Common myeloid progenitor, CD34-positive (primary cell): ENCODE measurements at regions of chr16 and their contacts with region 1.

Region 1: GRCh38 chr16:8567750-8568617 is 22.3 kb downstream of the TMEM114 start:
- DNase-seq: peak; percentile 93 to 97 (median 96)
- H3K4me3 ChIP-seq: no peak overlapping the region
- H3K27ac ChIP-seq: no peak overlapping the region
- H3K4me1 ChIP-seq: peaks cover 0 to 6% (median 3%) of the 10 kb centered on the region in 4 experiments
- H3K27me3 ChIP-seq: peaks cover 0 to 11% (median 0%) of the 10 kb centered on the region in 5 experiments

Region 2: DNA sequence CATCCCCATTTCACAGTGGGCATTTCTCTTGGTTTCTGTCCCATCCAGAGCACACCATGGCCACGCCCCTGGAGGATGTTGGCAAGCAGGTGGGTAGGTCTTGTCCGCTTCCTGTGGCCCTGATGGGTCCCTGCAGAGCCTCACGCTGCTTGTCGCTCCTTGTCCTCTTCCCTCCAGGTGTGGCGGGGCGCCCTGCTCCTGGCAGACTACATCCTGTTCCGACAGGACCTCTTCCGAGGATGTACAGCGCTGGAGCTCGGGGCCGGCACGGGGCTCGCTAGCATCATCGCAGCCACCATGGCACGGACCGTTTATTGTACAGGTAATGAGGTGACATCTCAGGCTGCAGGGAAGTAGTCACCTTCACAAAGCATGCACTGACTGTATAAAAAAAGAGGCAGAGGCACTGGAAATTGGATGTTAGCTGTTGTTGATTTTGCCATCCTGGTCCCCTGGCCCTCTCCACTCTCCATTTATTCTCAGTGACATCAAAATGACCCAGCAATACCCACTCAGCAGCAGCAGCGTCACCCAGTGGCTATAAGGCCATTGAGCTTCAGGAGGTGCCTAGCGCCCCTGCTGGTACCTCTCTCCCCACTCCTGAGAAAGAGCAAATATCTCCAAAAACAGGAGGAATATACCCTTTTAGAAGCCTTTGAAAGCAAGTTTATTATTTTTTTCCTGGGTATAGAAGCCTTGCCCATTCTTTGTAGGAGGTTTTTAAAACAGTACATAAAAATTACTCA is 67.2 kb after region 1 on chr16:
- CTCF ChIA-PET with region 1: interaction called, 10 read pairs
- POLR2A ChIA-PET with region 1: no interaction called
- DNase-seq: peak in 1 of 3 donors; percentile 17
- H3K4me3 ChIP-seq: no peak overlapping the region
- H3K27ac ChIP-seq: no peak overlapping the region
- H3K4me1 ChIP-seq: peaks cover 3 to 23% (median 16%) of the 10 kb centered on the region in 4 experiments
- H3K27me3 ChIP-seq: no peaks in the 10 kb centered on the region

Region 3: DNA sequence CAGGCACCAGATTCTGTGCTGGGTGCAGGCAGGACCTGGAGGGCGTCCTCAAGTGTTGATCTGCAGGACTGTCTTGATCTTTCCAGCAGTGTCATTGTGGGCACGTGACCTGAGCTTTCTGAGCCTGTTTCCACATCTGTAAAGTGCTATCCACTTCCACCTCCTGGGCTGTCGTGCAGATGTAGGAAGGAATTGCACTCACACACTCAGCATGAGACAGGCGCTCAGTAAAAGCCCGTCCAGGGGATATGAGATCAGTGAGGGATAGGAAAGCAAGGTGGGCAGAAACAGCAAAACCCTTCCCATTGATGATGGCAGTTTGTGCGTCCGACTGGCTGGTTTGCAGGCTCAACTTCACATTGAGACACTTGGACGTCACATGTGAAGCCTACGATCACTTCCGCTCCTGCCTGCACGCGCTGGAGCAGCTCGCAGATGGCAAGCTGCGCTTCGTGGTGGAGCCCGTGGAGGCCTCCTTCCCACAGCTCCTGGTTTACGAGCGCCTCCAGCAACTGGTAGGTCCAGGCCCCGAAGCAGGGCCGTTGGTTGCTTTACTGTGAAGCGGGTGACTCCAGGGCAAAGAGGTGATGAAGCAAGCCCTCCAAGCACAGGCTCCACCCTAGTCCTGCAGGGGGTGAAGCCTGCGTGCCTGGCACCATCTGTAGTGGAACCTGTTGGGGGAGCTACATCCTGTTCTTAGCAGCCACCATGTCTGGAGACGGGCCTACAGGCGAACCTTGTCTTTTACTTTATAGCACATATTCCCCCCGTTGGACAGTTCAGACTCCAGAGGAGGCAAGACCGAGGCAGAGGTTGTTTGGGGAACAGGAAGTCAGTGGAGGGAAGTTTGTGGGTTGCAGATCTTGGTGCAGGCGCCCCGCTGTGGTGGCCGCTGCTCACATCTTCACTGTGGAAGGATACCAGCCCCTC is 76.5 kb after region 1 on chr16:
- CTCF ChIA-PET with region 1: interaction called, 31 read pairs
- POLR2A ChIA-PET with region 1: interaction called, 3 read pairs
- DNase-seq: peak; percentile 64 to 89 (median 82)
- H3K4me3 ChIP-seq: peak overlapping the region in 2 of 7 experiments; percentile 4 to 33
- H3K27ac ChIP-seq: peak overlapping the region in 1 of 2 experiments; percentile 38
- H3K4me1 ChIP-seq: peaks cover 0 to 28% (median 13%) of the 10 kb centered on the region in 4 experiments
- H3K27me3 ChIP-seq: no peaks in the 10 kb centered on the region

Region 4: GRCh38 chr16:8760021-8760420 is 192.0 kb after region 1 on chr16:
- CTCF ChIA-PET with region 1: no interaction called
- POLR2A ChIA-PET with region 1: no interaction called
- DNase-seq: no peak
- H3K4me3 ChIP-seq: no peak overlapping the region
- H3K27ac ChIP-seq: no peak overlapping the region
- H3K4me1 ChIP-seq: no peaks in the 10 kb centered on the region
- H3K27me3 ChIP-seq: no peaks in the 10 kb centered on the region

Region 5: GRCh38 chr16:8797364-8798173 is 229.6 kb after region 1 on chr16 and contains the starts of genes PMM2 and TMEM186:
- CTCF ChIA-PET with region 1: interaction called, 17 read pairs
- POLR2A ChIA-PET with region 1: no interaction called
- DNase-seq: peak; percentile 96 to 99 (median 98)
- H3K4me3 ChIP-seq: peak within 1 kb of the TSS; percentile 57 to 90 (median 82)
- H3K27ac ChIP-seq: peak within 1 kb of the TSS; percentile 68 to 91
- H3K4me1 ChIP-seq: peaks cover 15 to 30% (median 26%) of the 10 kb centered on the region in 4 experiments
- H3K27me3 ChIP-seq: no peaks in the 10 kb centered on the region

Region 6: GRCh38 chr16:8878521-8878911 is 310.5 kb after region 1 on chr16:
- CTCF ChIA-PET with region 1: interaction called, 13 read pairs
- POLR2A ChIA-PET with region 1: no interaction called
- DNase-seq: no peak
- H3K4me3 ChIP-seq: no peak overlapping the region
- H3K27ac ChIP-seq: no peak overlapping the region
- H3K4me1 ChIP-seq: peaks cover 0 to 8% (median 5%) of the 10 kb centered on the region in 4 experiments
- H3K27me3 ChIP-seq: no peaks in the 10 kb centered on the region